Caco-2 (cell line): ENCODE measurements at regions of chr3 and their contacts with region 1.

Region 1: DNA sequence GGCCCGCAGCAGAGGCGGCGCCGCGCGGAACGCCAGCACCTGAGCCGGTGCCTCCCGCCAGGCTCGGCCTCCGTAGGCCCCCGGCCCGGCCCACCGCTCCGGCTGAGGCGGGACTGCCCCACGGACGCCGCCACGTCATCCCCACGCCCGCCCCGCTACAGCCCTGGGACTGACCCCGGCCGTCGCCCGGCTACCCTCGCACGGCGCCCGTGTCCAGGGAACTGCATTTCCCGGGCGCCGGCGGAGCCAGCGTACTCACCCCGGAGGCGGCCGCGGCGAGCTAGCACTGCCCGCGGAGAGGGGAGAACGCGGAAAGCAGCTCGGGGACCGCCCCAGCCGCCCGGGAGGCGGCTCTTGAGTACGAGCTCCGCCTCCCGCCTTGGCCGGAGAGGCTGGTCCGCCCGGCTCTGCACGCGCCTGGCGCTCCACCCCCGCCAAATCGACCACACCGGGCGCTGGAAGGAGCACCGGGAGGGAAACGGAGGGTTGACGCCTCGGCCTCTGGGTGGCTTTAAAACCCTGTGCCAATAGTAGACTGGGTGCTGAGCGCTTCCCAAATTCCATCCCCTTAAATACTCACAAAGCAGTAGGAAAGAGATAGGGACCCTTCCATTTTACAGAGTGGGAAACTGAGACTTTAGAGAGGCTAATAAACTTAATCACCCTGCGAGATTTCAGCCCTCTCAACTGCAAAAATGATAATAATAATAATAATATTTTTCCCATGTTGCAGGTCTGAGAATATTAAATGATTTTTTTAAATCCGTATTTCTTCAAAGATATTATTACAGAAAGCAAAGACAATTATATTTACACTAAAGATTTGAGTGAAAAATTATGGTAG is at the start of gene B4GALT4:
- DNase-seq: peak; percentile 90 to 94
- H3K4me3 ChIP-seq: peak within 1 kb of the TSS; percentile 66
- H3K4me3 Mint-ChIP-seq: peak within 1 kb of the TSS; percentile 85
- H3K27ac Mint-ChIP-seq: peak within 1 kb of the TSS; percentile 91
- H3K4me1 ChIP-seq: peaks cover 17% of the 10 kb centered on the region
- H3K4me1 Mint-ChIP-seq: peaks cover 6% of the 10 kb centered on the region
- H3K27me3 ChIP-seq: no peaks in the 10 kb centered on the region
- H3K27me3 Mint-ChIP-seq: no peaks in the 10 kb centered on the region
- CTCF ChIP-seq: no peak
- total RNA-seq, gene B4GALT4: 56.9 and 59.7 TPM in 2 replicates

Region 2: DNA sequence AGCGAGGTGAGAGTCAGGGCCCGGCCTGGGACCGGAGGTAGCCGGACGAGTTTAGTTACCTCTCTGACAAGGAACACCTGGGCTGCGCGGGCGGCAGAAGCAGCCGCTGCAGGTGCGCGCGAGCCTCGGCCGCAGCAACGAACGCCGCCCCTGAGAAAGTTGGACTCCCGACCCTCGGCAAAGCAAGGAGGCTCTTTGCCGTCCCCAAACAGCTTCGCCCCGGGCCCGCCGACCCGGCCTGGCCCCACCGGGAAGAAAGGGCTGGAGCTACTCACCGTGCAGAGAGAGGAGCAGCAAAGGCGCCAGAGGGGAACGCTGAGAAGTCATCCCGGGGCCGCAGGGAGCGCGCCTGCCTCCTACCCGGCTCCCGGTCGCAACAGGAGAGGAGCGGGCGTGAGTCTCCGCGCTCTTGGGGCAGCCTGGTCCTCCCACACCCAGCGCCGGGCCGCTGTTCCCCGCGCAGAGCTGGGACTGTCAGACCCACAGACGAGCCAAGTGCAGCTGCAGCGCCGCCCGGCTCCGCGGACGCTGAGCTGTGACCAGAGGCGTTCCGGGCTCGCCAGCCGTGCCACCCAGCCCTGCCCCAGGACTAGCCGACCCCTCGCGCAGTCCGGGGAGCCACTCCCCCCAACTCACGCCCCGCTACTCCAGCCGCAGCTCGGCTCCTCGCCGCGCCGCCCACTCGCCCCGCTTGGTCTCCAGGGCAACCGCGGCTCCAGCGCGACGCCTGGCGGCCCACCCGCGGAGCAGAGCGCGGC is 206.4 kb before region 1 on chr3 and contains the start of gene IGSF11:
- CTCF ChIA-PET with region 1: no interaction called
- POLR2A ChIA-PET with region 1: no interaction called
- intact Hi-C with region 1: loop called (anchors 1 kb)
- DNase-seq: peak; percentile 64 to 71
- H3K4me3 ChIP-seq: peak within 1 kb of the TSS; percentile 49
- H3K4me3 Mint-ChIP-seq: peak within 1 kb of the TSS; percentile 84
- H3K27ac Mint-ChIP-seq: no peak within 1 kb of the TSS
- H3K4me1 ChIP-seq: 0 out of 2 replicates have a peak, but pooled peaks cover 4% of the 10 kb centered on the region
- H3K4me1 Mint-ChIP-seq: no peaks in the 10 kb centered on the region
- H3K27me3 ChIP-seq: peaks cover 2% of the 10 kb centered on the region; the same call in 1 of the 2 replicates
- H3K27me3 Mint-ChIP-seq: peaks cover 20% of the 10 kb centered on the region
- CTCF ChIP-seq: peak; percentile 25 to 53
- total RNA-seq, gene IGSF11: 0.37 and 0.41 TPM in 2 replicates

Region 3: DNA sequence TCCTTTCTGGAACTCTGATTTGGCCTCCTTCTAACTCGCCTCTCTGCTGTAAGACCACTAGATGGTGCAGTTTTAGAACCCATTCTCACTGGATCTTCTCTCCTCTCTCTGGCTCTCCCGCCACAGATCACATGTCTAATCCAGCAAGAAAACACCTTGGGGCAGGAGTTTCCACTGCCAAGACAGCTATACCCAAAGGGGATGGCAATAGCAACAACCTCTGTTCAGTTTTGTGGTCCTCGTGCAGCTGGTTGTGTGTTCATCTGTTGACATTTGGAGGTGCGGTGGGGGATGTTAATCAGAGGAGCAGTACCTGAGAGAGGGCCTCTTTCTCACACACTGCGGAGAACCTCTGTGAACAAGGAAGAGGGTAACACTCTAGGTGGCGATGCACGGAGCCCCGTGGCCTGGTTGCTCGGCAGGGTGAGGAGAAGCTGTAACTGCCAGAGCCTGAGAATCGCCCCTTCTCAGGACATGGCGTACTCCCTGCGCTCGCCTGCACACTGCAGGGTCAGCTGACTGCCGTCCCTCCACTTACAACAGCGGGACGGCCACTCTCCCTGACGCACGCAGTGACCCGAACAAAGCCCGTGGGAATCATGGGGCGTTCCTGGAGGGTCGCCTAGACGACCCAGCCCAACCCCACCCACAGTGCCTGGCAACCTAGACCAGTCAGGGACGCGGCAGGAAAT is 95.2 kb before region 1 on chr3 and contains the start of gene TEX55:
- CTCF ChIA-PET with region 1: interaction called, 26 read pairs
- POLR2A ChIA-PET with region 1: interaction called, 3 read pairs
- intact Hi-C with region 1: loop called (anchors 1 kb)
- DNase-seq: peak; percentile 51 to 58
- H3K4me3 ChIP-seq: no peak within 1 kb of the TSS
- H3K4me3 Mint-ChIP-seq: no peak within 1 kb of the TSS
- H3K27ac Mint-ChIP-seq: no peak within 1 kb of the TSS
- H3K4me1 ChIP-seq: peaks cover 10% of the 10 kb centered on the region; the same call in 1 of the 2 replicates
- H3K4me1 Mint-ChIP-seq: peaks cover 6% of the 10 kb centered on the region
- H3K27me3 ChIP-seq: no peaks in the 10 kb centered on the region
- H3K27me3 Mint-ChIP-seq: no peaks in the 10 kb centered on the region
- CTCF ChIP-seq: peak; percentile 62 to 74
- total RNA-seq, gene TEX55: not detected in 2 replicates

Region 4: GRCh38 chr3:119206611-119207511 is 34.0 kb before region 1 on chr3:
- CTCF ChIA-PET with region 1: interaction called, 30 read pairs
- POLR2A ChIA-PET with region 1: interaction called, 25 read pairs
- intact Hi-C with region 1: loop called (anchors 1 kb)
- DNase-seq: peak in 1 of 2 experiments; percentile 10
- H3K4me3 ChIP-seq: no peak overlapping the region
- H3K4me3 Mint-ChIP-seq: no peak overlapping the region
- H3K27ac Mint-ChIP-seq: no peak overlapping the region
- H3K4me1 ChIP-seq: peaks cover 29% of the 10 kb centered on the region
- H3K4me1 Mint-ChIP-seq: peaks cover 15% of the 10 kb centered on the region
- H3K27me3 ChIP-seq: no peaks in the 10 kb centered on the region; the same call in 1 of the 2 replicates
- H3K27me3 Mint-ChIP-seq: no peaks in the 10 kb centered on the region
- CTCF ChIP-seq: no peak

Region 5: GRCh38 chr3:119352849-119353502 is 112.2 kb after region 1 on chr3:
- CTCF ChIA-PET with region 1: interaction called, 15 read pairs
- POLR2A ChIA-PET with region 1: interaction called, 5 read pairs
- intact Hi-C with region 1: no loop called
- DNase-seq: peak in 1 of 2 experiments; percentile 43
- H3K4me3 ChIP-seq: no peak overlapping the region
- H3K4me3 Mint-ChIP-seq: peak overlapping the region; percentile 28
- H3K27ac Mint-ChIP-seq: peak overlapping the region; percentile 84
- H3K4me1 ChIP-seq: peaks cover 57% of the 10 kb centered on the region
- H3K4me1 Mint-ChIP-seq: peaks cover 48% of the 10 kb centered on the region
- H3K27me3 ChIP-seq: no peaks in the 10 kb centered on the region
- H3K27me3 Mint-ChIP-seq: no peaks in the 10 kb centered on the region
- CTCF ChIP-seq: peak; percentile 12 to 38